H1 (cell line): ENCODE measurements at regions of chr3 and their contacts with region 1.

Region 1: GRCh38 chr3:70358978-70359580 is 46.6 kb upstream of the MDFIC2 start:
- DNase-seq: no peak
- H3K4me3 ChIP-seq: no peak overlapping the region
- H3K27ac ChIP-seq: no peak overlapping the region
- H3K4me1 ChIP-seq: no peaks in the 10 kb centered on the region
- H3K27me3 ChIP-seq: no peaks in the 10 kb centered on the region
- CTCF ChIP-seq: peak in 2 of 3 experiments; percentile 39 to 65; a peak in 2 of 4 replicates
- EP300 ChIP-seq: no peak
- POLR2A ChIP-seq: no peak
- RAD21 ChIP-seq: peak; percentile 65 to 70

Region 2: DNA sequence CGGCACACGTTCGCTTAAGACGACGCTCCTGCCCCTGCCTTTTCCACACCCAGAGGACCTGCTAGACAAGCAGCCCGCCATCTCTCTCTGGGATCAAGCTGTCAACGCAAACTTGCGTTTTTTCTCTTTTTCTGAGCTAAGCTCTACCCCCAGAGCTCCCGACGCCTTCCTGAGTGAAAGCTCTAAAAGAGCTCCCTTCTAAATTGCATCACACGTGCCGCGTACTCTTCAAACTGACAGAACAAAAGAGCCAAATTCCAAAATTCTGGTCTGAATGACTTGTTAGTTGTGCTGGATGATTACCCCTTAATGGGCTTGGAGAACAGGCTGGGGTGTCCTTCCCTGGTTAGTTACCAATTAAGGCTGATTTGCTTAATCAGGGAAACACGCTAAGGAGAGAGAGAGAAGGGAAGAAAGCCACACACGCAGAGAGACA is 127.8 kb before region 1 on chr3:
- CTCF ChIA-PET with region 1: no interaction called
- POLR2A ChIA-PET with region 1: no interaction called
- DNase-seq: no peak
- H3K4me3 ChIP-seq: no peak overlapping the region
- H3K27ac ChIP-seq: no peak overlapping the region
- H3K4me1 ChIP-seq: no peaks in the 10 kb centered on the region
- H3K27me3 ChIP-seq: peaks cover 0 to 1% (median 0%) of the 10 kb centered on the region in 4 experiments; a peak in 1 of 7 replicates
- CTCF ChIP-seq: no peak
- EP300 ChIP-seq: no peak
- POLR2A ChIP-seq: no peak
- RAD21 ChIP-seq: no peak

Region 3: DNA sequence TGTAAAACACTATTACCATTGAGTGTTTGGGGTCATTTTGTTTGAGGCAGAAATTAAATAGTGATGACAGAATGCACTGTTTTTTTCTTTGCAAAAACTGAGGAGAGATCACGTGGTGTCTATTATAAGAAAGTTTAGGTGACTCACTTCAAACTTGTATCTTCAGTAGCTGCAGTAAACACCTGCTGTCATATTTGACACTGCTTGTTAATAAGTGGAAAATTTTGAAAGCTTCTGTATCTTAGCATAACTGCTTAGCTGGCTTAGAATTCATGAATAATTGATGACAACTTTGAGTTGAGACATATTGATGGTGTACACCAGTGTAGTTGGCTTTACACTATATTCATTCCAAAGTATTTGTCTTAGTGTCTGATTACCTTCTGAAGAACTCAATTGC is 16.9 kb before region 1 on chr3:
- CTCF ChIA-PET with region 1: interaction called, 19 read pairs
- POLR2A ChIA-PET with region 1: no interaction called
- DNase-seq: no peak
- H3K4me3 ChIP-seq: no peak overlapping the region
- H3K27ac ChIP-seq: no peak overlapping the region
- H3K4me1 ChIP-seq: no peaks in the 10 kb centered on the region
- H3K27me3 ChIP-seq: no peaks in the 10 kb centered on the region
- CTCF ChIP-seq: no peak
- EP300 ChIP-seq: no peak
- POLR2A ChIP-seq: no peak
- RAD21 ChIP-seq: no peak

Region 4: DNA sequence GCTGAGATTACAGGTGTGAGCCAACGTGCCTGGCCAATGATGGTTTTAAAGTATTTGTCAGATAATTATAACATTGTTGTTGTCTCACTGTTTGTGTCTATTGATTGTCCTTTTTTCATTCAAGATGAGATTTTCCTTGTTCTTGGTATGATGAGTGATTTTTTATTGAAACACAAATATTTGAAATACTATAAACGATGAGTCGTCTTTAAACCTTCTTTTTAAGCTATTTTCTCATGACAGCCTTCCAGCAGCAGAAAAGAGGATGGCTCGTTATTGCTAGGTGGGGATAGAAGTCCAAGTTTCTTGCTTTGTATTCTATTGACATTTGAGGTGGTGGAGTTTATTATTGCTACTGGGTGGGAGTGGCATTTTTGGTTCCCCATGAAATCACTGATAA is 15.1 kb after region 1 on chr3:
- CTCF ChIA-PET with region 1: no interaction called
- POLR2A ChIA-PET with region 1: no interaction called
- DNase-seq: no peak
- H3K4me3 ChIP-seq: no peak overlapping the region
- H3K27ac ChIP-seq: no peak overlapping the region
- H3K4me1 ChIP-seq: no peaks in the 10 kb centered on the region
- H3K27me3 ChIP-seq: no peaks in the 10 kb centered on the region
- CTCF ChIP-seq: no peak
- EP300 ChIP-seq: no peak
- POLR2A ChIP-seq: no peak
- RAD21 ChIP-seq: no peak

Region 5: DNA sequence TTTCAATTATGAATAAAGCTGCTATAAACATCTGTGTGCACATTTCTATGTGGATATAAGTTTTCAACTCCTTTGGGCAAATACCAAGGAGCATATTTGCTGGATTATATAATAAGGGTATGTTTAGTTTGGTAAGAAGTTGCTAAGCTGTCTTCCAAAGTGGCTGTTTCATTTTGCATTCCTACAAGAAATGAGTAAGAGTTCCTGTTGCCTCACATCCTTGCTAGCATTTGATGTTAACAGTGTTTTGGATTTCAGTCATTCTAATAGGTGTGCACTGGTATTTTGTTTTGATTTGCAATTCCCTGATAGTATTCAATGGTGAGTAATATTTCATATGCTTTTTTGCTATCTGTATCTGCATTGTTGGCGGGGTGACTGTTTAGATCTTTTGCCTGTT is 74.0 kb after region 1 on chr3:
- CTCF ChIA-PET with region 1: no interaction called
- POLR2A ChIA-PET with region 1: no interaction called
- DNase-seq: no peak
- H3K4me3 ChIP-seq: no peak overlapping the region
- H3K27ac ChIP-seq: no peak overlapping the region
- H3K4me1 ChIP-seq: no peaks in the 10 kb centered on the region
- H3K27me3 ChIP-seq: no peaks in the 10 kb centered on the region
- CTCF ChIP-seq: no peak
- EP300 ChIP-seq: no peak
- POLR2A ChIP-seq: no peak
- RAD21 ChIP-seq: no peak